ENCODE measurements at regions of chr3 and their contacts with region 1.

Region 1: DNA sequence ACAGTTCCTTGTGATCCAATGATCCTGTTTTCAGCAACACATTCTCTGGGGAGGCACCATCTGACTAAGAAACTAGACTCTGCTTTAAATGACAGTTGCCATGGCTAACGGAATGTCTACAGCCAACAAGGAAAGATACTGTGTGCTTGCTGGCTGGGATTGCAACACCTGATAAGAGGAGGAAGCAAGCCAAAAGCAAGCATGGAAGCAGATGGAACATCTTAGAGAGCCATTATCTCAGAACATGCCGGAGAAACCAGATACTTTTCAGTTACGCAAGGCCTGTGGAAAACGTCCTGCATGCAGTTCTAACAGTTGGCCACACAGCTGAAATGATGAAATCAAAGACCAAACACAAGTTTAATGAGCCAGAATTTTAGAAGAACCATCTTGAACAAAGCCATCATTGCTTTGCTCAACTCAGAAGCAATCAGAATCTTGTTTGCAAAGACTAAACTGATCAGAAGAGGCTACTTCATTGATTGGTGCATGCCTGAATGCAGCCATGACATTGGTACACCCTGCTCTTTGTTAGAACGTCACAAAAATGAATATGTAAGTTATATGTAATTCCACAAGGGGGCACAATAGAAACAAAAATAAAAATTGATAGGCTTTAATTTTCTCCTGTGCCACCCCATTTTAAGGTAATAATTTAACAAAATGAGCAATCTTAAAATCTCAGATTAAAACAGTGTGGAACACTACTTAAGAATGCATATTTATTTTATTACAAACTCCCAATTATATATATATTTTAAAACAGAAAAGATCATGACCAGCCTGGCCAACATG is 50.8 kb downstream of the GXYLT2 start:
- DNase-seq: no peak
- ATAC-seq: peak; percentile 81
- H3K4me3 Mint-ChIP-seq: no peak overlapping the region
- H3K27ac Mint-ChIP-seq: no peak overlapping the region
- H3K4me1 Mint-ChIP-seq: no peaks in the 10 kb centered on the region
- H3K27me3 Mint-ChIP-seq: peaks cover 4% of the 10 kb centered on the region
- CTCF ChIP-seq: no peak

Region 2: DNA sequence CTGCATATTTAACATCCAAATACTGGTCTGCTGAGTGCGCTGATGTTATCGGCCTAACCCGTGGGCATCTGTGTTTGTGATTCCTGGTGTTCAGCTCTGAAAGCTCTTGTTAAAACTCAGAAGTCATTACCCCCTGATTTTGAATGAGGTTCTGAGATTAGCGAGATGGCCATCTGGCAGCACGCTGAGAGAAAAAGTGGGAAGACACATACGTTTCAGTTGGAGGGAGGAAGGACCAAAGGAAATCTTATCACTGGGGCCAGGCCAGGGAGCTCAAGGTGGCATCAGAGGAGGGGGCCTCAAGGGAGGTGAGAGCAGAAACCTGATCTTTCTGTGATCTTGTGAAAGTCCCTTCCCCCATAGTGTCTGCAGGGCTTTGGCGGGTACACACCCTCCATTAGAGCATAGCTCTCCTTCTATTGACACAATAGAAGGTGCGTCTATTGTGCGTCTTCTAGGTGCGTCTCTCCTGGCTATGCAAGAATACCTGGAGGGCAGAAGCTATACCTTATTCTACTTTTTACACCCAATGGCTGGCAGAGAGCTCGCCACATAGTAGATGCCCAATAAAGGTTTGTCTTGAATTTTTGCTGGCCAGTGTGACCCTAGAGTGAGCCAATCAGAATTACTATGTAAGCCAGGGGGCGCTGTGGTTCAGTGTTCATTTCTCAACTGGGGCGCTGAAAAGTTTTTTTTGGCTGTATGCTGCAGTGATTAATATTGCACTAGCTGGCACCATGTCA is 272.8 kb before region 1 on chr3:
- CTCF ChIA-PET with region 1: no interaction called
- POLR2A ChIA-PET with region 1: no interaction called
- intact Hi-C with region 1: loop called (anchors 5 kb)
- DNase-seq: no peak
- ATAC-seq: peak; percentile 50
- H3K4me3 Mint-ChIP-seq: no peak overlapping the region
- H3K27ac Mint-ChIP-seq: no peak overlapping the region
- H3K4me1 Mint-ChIP-seq: no peaks in the 10 kb centered on the region
- H3K27me3 Mint-ChIP-seq: peaks cover 6% of the 10 kb centered on the region
- CTCF ChIP-seq: no peak

Region 3: GRCh38 chr3:73029321-73029796 is 90.7 kb after region 1 on chr3:
- CTCF ChIA-PET with region 1: no interaction called
- POLR2A ChIA-PET with region 1: no interaction called
- intact Hi-C with region 1: no loop called
- DNase-seq: no peak
- ATAC-seq: no peak
- H3K4me3 Mint-ChIP-seq: no peak overlapping the region
- H3K27ac Mint-ChIP-seq: no peak overlapping the region
- H3K4me1 Mint-ChIP-seq: peaks cover 72% of the 10 kb centered on the region
- H3K27me3 Mint-ChIP-seq: no peaks in the 10 kb centered on the region
- CTCF ChIP-seq: no peak

Region 4: DNA sequence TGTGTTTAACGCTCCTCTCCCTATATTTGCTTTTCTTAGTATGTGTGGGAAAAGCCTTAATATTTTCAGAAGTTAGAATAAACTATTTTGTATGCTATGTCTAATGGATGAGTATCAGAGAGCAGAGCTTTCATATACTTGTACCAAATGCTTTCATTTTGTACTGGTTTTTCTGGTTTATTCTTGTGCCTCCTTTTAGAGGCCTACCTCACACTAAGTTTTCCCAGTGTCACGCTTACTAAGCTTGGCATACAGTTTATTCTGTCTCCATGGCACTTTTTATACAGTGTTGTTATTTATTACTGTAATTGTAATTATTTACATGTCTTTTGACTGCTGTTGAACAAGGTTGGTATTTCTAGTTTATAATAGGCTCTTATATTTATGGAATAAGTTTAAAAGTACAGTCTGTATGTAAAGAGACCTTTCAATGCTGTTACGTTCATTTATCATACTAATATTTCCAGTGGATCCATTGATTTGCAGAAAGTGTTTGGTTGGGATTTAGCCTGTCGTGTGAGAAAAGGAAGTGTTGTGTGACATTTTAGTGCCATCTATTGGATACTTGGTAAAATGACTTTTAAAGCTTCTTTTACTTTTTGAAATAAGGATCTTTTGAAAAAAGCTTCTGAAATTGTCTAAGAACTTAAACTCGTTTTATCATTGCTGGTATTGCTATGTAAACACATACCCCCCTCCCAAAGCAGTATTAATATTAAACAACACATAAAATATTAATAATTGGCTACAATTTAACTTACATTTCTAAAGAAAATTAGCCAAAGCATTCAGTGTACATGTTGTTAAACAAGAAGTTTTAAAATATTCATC is 117.6 kb after region 1 on chr3:
- CTCF ChIA-PET with region 1: interaction called, 57 read pairs
- POLR2A ChIA-PET with region 1: no interaction called
- intact Hi-C with region 1: loop called (anchors 1 kb)
- DNase-seq: no peak
- ATAC-seq: no peak
- H3K4me3 Mint-ChIP-seq: no peak overlapping the region
- H3K27ac Mint-ChIP-seq: no peak overlapping the region
- H3K4me1 Mint-ChIP-seq: peaks cover 3% of the 10 kb centered on the region
- H3K27me3 Mint-ChIP-seq: no peaks in the 10 kb centered on the region
- CTCF ChIP-seq: no peak

Measured in activated B cell treated with CpG ODN at 0.5 μM for 24 hours (primary cell).